Heart left ventricle (tissue), 16 donors: ENCODE measurements at regions of chr13 and their contacts with region 1.

Region 1: GRCh38 chr13:101942038-101942437 is 459.8 kb downstream of the FGF14 start:
- DNase-seq: peak in 2 of 5 donors; percentile 23 to 25
- ATAC-seq: peak in 3 of 4 donors; percentile 88 to 94 (median 88)
- H3K4me3 ChIP-seq: no peak overlapping the region
- H3K27ac ChIP-seq: no peak overlapping the region
- H3K4me1 ChIP-seq: peaks cover 0 to 7% (median 0%) of the 10 kb centered on the region in 12 donors
- H3K27me3 ChIP-seq: no peaks in the 10 kb centered on the region
- CTCF ChIP-seq: peak; percentile 54 to 85 (median 78)
- POLR2A ChIP-seq: no peak

Region 2: DNA sequence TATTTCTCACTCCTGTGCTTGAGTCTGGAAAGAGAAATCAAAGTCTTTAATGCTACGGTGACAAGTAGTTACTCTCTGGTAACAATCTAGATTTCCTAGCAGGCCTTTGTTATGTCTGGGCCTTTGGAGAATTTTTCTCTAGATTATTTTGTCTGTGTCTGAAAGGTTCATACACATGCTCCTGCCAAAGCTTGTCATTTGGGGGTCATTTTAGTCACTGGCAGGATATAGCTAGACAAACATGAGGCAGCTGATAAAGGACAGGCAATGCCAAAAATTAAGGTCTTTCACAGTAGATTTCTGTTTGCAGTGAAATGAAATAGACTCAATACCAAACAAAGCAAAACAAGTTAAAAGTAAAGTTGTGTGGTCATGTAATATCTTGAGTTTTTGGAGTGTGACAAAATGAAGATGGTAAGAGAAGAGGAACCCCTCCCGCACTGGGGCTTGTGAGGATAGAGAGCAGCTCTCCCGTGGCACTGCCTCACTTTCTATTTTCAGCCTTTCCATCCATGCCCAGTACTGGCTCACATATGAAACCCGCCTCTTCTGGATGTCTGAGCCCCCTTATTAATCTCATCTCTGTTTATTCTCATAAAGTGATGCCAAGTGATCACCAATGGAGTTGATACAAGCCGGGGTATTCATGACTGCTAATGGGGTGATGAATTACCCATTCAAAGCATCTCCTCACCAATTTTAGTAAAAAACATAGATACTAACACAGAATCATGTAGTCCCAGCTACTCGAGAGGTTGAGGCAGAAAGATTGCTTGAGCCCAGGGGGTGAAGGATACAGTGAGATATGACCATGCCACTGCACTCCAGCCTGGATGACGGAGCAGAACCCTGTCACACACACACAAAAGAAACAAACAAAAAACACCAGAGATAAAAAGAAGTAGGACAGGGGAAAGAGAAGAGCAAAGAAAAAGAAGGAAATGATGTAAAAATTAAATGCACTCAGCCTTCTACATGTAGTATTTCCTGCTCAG is 70.6 kb after region 1 on chr13:
- intact Hi-C with region 1: loop called in 1 of 10 experiments (anchors 10 kb)
- DNase-seq: peak in 4 of 5 donors; percentile 61 to 73 (median 66)
- ATAC-seq: peak; percentile 94 to 98 (median 97)
- H3K4me3 ChIP-seq: peak overlapping the region in 2 of 12 donors; percentile 1 to 5
- H3K27ac ChIP-seq: peak overlapping the region; percentile 66 to 91 (median 80)
- H3K4me1 ChIP-seq: peaks cover 0 to 38% (median 16%) of the 10 kb centered on the region in 12 donors
- H3K27me3 ChIP-seq: no peaks in the 10 kb centered on the region
- CTCF ChIP-seq: no peak
- POLR2A ChIP-seq: no peak

Region 3: DNA sequence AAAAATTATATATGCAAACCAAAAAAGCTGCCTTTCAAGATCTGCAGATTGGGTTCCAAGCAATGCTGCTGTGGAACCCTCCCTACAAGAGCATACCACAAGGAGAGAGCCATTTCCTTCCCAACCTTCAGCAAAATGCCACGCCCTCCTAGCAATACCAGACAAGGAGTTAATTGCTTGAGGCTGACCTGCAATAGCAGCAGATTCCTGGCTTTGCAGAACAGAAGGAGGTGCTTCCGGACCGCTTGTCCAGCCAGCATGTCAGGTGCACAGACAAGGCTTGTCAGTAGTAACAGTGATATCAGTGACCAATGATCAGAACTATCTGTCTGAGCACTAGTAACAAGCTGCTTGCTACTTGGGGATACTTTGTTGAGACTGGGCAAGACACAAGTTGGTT is 158.2 kb after region 1 on chr13:
- intact Hi-C with region 1: loop called in 2 of 10 experiments (anchors 10 kb)
- DNase-seq: no peak
- ATAC-seq: no peak
- H3K4me3 ChIP-seq: no peak overlapping the region
- H3K27ac ChIP-seq: no peak overlapping the region
- H3K4me1 ChIP-seq: peaks cover 0 to 6% (median 0%) of the 10 kb centered on the region in 12 donors
- H3K27me3 ChIP-seq: no peaks in the 10 kb centered on the region
- CTCF ChIP-seq: no peak
- POLR2A ChIP-seq: no peak

Region 4: DNA sequence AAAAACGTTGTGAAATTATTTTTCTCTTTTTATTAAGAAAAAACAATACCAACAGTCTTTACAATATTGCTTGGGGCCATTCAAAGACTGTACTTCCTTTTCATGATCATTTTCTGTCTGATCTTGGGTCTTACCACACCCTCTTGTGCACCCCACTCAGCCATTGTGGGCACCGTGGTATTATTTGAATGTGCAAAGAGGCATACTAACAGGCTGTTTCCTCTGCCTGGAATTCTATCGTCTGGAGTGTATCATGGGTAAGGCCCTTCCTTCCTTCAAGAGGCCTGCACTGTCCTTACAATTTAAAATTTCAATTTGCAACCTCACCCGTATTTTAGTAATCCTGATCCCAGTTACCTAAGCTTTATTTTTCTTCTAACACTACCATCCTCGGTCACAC is 383.3 kb after region 1 on chr13:
- intact Hi-C with region 1: no loop called
- DNase-seq: no peak
- ATAC-seq: no peak
- H3K4me3 ChIP-seq: no peak overlapping the region
- H3K27ac ChIP-seq: no peak overlapping the region
- H3K4me1 ChIP-seq: no peaks in the 10 kb centered on the region
- H3K27me3 ChIP-seq: no peaks in the 10 kb centered on the region
- CTCF ChIP-seq: no peak
- POLR2A ChIP-seq: no peak

Region 5: DNA sequence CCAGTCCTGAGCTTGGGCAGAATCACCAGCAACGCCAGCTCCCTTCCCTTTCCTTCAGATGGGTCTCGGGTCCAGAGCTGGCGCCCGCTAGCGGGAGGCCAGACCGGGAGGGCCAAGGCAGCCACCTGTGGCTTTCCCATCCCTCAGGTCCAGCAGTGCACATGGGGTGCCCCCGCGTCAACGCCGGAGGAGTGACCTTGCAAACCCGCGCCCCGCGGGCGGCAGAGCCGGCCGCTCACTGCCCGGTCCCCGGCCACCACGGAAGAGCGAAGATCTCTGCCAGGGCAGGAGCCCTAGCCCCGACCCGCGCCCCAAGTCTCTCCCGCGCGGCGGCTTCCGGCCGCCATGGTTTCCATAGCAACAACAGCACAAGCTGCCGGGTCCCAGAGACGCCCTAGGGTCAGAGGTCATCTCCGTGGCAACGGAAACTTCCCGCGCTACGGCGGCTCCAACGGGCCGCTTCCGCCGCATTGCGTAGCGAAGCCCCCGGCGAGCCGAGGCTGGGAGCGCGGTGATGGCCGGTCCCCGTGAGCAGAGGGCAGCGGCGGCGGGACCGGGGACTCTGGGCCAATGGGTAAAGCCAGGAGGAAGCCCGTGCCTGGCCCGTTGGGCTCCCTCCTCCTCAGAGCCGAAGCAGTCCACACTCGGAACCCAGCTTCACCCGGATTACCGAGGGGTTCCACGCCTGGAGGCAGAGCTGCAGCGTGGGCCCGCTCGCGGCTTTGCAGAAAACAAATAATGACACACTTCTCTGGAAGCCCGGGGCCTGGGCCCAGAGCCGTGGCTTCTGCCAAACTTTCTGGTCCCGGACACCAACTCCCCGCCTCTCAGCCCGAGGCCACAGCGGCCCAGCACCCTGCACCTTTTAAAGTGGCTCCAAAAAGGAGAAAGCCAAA is 452.4 kb after region 1 on chr13:
- intact Hi-C with region 1: loop called in 3 of 10 experiments (anchors 5 to 10 kb)
- DNase-seq: peak; percentile 95 to 97 (median 97)
- ATAC-seq: peak; percentile 89 to 99 (median 98)
- H3K4me3 ChIP-seq: peak overlapping the region; percentile 54 to 99 (median 83)
- H3K27ac ChIP-seq: peak overlapping the region; percentile 29 to 92 (median 84)
- H3K4me1 ChIP-seq: peaks cover 0 to 17% (median 10%) of the 10 kb centered on the region in 12 donors
- H3K27me3 ChIP-seq: peaks cover 0 to 13% (median 0%) of the 10 kb centered on the region in 9 donors
- CTCF ChIP-seq: peak in 7 of 12 donors; percentile 12 to 43 (median 30)
- POLR2A ChIP-seq: peak in 1 of 2 donors; percentile 64

Region 6: DNA sequence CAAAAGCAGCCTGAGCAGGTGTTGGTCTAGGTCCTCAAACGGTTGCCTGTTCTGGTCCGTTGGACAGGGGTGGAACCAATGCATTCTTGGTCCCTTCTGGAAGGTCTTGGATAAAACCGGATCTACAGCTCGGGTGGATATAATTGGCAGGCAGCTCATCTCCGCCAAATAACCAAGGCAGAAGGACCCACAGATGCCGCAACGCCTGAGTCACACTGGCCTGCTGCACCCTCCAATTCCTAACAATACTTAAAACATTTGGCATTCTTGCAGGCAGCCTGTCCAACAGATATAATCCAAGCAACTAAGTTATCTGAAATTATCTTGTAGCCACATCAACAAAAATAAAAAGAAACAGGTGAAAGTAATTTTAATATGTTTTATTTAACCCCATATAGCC is 518.8 kb after region 1 on chr13:
- intact Hi-C with region 1: loop called (anchors 2 to 5 kb)
- DNase-seq: no peak
- ATAC-seq: no peak
- H3K4me3 ChIP-seq: no peak overlapping the region
- H3K27ac ChIP-seq: no peak overlapping the region
- H3K4me1 ChIP-seq: no peaks in the 10 kb centered on the region
- H3K27me3 ChIP-seq: no peaks in the 10 kb centered on the region
- CTCF ChIP-seq: no peak
- POLR2A ChIP-seq: no peak

Region 7: GRCh38 chr13:102555917-102556553 is 614.0 kb after region 1 on chr13:
- intact Hi-C with region 1: loop called in 9 of 10 experiments (anchors 1 to 10 kb)
- DNase-seq: no peak
- ATAC-seq: peak in 1 of 4 donors; percentile 41
- H3K4me3 ChIP-seq: no peak overlapping the region
- H3K27ac ChIP-seq: no peak overlapping the region
- H3K4me1 ChIP-seq: no peaks in the 10 kb centered on the region
- H3K27me3 ChIP-seq: no peaks in the 10 kb centered on the region
- CTCF ChIP-seq: peak in 11 of 12 donors; percentile 33 to 61 (median 48)
- POLR2A ChIP-seq: no peak